ENCODE measurements at regions of chr9 and their contacts with region 1.

Region 1: GRCh38 chr9:91193658-91194391 is 167.9 kb downstream of the AUH start:
- DNase-seq: peak; percentile 95
- H3K4me3 Mint-ChIP-seq: peak overlapping the region; percentile 85
- H3K27ac Mint-ChIP-seq: peak overlapping the region; percentile 99
- H3K4me1 Mint-ChIP-seq: peaks cover 71% of the 10 kb centered on the region
- H3K27me3 Mint-ChIP-seq: no peaks in the 10 kb centered on the region

Region 2: DNA sequence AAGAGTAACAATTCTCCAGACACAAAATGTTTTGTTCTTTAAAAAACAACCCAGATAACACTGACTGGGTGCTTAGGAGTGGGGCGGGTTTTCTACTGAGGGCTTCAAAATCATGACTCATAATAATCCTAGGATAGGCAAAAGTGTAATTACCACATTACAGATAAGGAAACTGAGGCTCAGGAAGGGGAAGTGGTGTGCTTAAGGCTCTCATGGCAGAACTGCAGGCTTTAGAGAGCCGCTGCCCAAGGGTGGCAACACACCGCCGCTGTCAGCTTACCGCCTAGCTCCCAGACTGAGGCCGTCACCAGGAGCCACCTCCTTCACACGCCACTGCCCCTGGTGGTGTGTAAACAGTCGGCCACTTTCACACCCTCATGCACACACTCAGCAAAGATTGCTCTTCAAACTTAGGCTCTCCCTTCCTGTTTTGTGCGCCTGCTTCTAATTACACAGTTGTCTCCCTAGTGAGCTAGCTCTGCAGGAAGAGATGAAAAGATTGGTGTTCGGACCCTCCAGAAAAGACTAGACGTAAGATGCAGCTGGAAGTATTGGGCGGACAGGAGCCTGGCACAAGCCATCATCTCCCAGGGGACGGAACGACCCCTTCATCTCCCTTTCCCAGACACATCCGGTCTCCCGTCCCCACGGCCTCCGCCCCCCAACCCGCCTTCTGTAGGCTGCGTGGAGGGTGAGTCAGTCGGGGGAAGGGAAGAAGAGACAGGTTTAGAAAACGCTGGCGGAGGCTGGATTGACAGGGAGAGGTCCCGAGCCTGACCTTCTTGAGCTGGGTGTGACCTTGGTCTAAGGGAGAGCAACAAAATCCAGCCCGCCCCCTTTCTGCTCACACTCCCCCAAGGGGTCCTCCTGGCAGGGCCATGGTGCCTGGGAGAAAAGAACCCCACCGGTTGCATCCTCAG is 229.5 kb before region 1 on chr9:
- intact Hi-C with region 1: loop called (anchors 5 kb)
- DNase-seq: no peak
- H3K4me3 Mint-ChIP-seq: peak overlapping the region; percentile 18
- H3K27ac Mint-ChIP-seq: peak overlapping the region; percentile 25
- H3K4me1 Mint-ChIP-seq: peaks cover 25% of the 10 kb centered on the region
- H3K27me3 Mint-ChIP-seq: peaks cover 2% of the 10 kb centered on the region

Region 3: GRCh38 chr9:91071185-91071990 is 122.4 kb before region 1 on chr9:
- intact Hi-C with region 1: loop called (anchors 1 kb)
- DNase-seq: peak; percentile 84
- H3K4me3 Mint-ChIP-seq: peak overlapping the region; percentile 50
- H3K27ac Mint-ChIP-seq: peak overlapping the region; percentile 96
- H3K4me1 Mint-ChIP-seq: peaks cover 17% of the 10 kb centered on the region
- H3K27me3 Mint-ChIP-seq: no peaks in the 10 kb centered on the region

Region 4: GRCh38 chr9:91122755-91123154 is 71.1 kb before region 1 on chr9:
- intact Hi-C with region 1: no loop called
- DNase-seq: no peak
- H3K4me3 Mint-ChIP-seq: no peak overlapping the region
- H3K27ac Mint-ChIP-seq: peak overlapping the region; percentile 15
- H3K4me1 Mint-ChIP-seq: peaks cover 22% of the 10 kb centered on the region
- H3K27me3 Mint-ChIP-seq: peaks cover 2% of the 10 kb centered on the region

Region 5: DNA sequence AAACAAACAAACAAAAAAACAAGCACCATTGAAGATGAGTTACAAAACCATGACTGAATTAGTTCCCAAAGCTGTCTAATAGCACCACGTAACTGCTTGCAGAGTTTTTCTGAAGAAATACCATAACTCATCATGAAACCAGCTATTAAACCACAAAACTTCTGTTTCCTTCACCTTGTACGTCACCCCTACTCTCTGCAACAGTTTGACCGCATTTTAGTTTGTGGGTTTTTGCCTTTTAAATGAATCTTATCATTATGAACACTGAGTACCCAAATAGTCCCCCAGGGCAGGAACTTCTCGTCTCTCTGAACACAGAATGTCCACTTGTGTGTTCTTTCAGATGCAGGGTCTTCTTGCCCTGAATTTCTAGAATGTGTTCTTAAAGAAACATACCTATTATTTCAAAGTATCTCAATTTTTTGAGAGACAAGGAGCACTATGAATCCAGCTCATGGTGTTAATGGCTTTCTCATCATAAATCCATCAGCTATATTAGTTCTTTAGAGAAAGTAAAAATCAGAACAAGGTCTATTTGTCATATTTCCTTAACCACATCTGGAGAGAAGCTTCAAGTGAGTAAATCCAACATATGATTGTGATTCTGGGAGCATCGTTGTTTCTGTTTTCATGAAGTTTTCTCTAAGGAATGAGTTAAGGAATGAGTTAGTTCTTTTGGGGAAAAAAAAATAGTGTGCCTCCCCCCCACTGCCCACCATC is 42.7 kb before region 1 on chr9:
- intact Hi-C with region 1: loop called (anchors 1 kb)
- DNase-seq: peak; percentile 91
- H3K4me3 Mint-ChIP-seq: peak overlapping the region; percentile 61
- H3K27ac Mint-ChIP-seq: peak overlapping the region; percentile 98
- H3K4me1 Mint-ChIP-seq: peaks cover 82% of the 10 kb centered on the region
- H3K27me3 Mint-ChIP-seq: no peaks in the 10 kb centered on the region

Region 6: GRCh38 chr9:91207729-91208418 is 14.0 kb after region 1 on chr9:
- intact Hi-C with region 1: loop called (anchors 1 kb)
- DNase-seq: peak; percentile 83
- H3K4me3 Mint-ChIP-seq: peak overlapping the region; percentile 68
- H3K27ac Mint-ChIP-seq: peak overlapping the region; percentile 98
- H3K4me1 Mint-ChIP-seq: peaks cover 46% of the 10 kb centered on the region
- H3K27me3 Mint-ChIP-seq: no peaks in the 10 kb centered on the region

Region 7: GRCh38 chr9:91395553-91396471 is 202.0 kb after region 1 on chr9:
- intact Hi-C with region 1: loop called (anchors 1 kb)
- DNase-seq: peak; percentile 80
- H3K4me3 Mint-ChIP-seq: peak overlapping the region; percentile 57
- H3K27ac Mint-ChIP-seq: peak overlapping the region; percentile 86
- H3K4me1 Mint-ChIP-seq: peaks cover 12% of the 10 kb centered on the region
- H3K27me3 Mint-ChIP-seq: peaks cover 2% of the 10 kb centered on the region